Naive thymus-derived CD4-positive, alpha-beta T cell (primary cell): ENCODE measurements at regions of chr7 and their contacts with region 1.

Region 1: GRCh38 chr7:82559193-82559805 is 115.7 kb upstream of the CACNA2D1 start:
- DNase-seq: no peak
- ATAC-seq: no peak
- H3K4me3 ChIP-seq: no peak overlapping the region
- H3K4me3 Mint-ChIP-seq: no peak overlapping the region
- H3K27ac ChIP-seq: no peak overlapping the region
- H3K27ac Mint-ChIP-seq: no peak overlapping the region
- H3K4me1 ChIP-seq: no peaks in the 10 kb centered on the region
- H3K4me1 Mint-ChIP-seq: peaks cover 0 to 4% (median 0%) of the 10 kb centered on the region in 7 donors
- H3K27me3 ChIP-seq: no peaks in the 10 kb centered on the region
- H3K27me3 Mint-ChIP-seq: peaks cover 0 to 5% (median 0%) of the 10 kb centered on the region in 5 donors

Region 2: GRCh38 chr7:82534683-82535082 is 24.6 kb before region 1 on chr7:
- CTCF ChIA-PET with region 1: no interaction called
- POLR2A ChIA-PET with region 1: no interaction called
- intact Hi-C with region 1: loop called in 1 of 2 experiments (anchors 2 kb)
- DNase-seq: no peak
- ATAC-seq: no peak
- H3K4me3 ChIP-seq: no peak overlapping the region
- H3K4me3 Mint-ChIP-seq: no peak overlapping the region
- H3K27ac ChIP-seq: no peak overlapping the region
- H3K27ac Mint-ChIP-seq: no peak overlapping the region
- H3K4me1 ChIP-seq: no peaks in the 10 kb centered on the region
- H3K4me1 Mint-ChIP-seq: no peaks in the 10 kb centered on the region
- H3K27me3 ChIP-seq: no peaks in the 10 kb centered on the region
- H3K27me3 Mint-ChIP-seq: peaks cover 0 to 3% (median 0%) of the 10 kb centered on the region in 5 donors